Ascending aorta (tissue), 2 donors: ENCODE measurements at regions of chr12 and their contacts with region 1.

Region 1: DNA sequence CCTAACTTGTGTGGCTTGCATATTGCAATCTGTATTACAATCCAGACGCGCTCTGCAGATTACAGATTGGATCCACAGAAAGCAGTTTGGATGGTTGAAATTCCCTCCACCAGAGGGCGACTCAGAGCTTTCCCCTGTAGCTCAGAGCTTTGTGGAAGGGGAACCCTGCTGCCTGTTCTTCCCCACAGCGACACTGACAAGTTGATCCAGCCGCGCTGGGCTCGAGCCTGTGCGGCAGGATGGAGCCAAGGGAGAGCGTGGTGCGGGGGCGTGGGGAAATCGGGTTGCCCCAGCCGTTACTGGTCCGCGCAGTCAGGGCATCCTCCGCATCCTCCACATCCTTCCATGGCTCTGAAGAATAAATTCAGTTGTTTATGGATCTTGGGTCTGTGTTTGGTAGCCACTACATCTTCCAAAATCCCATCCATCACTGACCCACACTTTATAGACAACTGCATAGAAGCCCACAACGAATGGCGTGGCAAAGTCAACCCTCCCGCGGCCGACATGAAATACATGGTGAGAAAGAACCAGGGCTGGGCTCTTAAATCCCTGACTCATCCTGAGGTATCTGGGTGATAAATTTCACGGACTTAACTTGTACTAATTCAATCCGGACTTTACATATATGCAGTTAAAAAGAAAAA is at the start of gene GLIPR1L1:
- DNase-seq: peak; percentile 43 to 96
- H3K4me3 ChIP-seq: peak within 1 kb of the TSS; percentile 54 to 63
- H3K27ac ChIP-seq: peak within 1 kb of the TSS; percentile 28 to 32
- H3K4me1 ChIP-seq: peaks cover 5 to 8% of the 10 kb centered on the region in 2 donors
- H3K27me3 ChIP-seq: no peaks in the 10 kb centered on the region
- CTCF ChIP-seq: peak; percentile 80 to 91 (median 87)
- total RNA-seq, gene GLIPR1L1: not detected

Region 2: GRCh38 chr12:75390899-75391538 is 56.5 kb after region 1 on chr12 and contains the start of gene GLIPR1L2:
- intact Hi-C with region 1: loop called (anchors 2 kb)
- DNase-seq: peak; percentile 89 to 98
- H3K4me3 ChIP-seq: peak within 1 kb of the TSS; percentile 63 to 76
- H3K27ac ChIP-seq: peak within 1 kb of the TSS; percentile 95 to 97
- H3K4me1 ChIP-seq: peaks cover 0 to 8% of the 10 kb centered on the region in 2 donors
- H3K27me3 ChIP-seq: no peaks in the 10 kb centered on the region
- CTCF ChIP-seq: peak; percentile 76 to 84 (median 79)
- total RNA-seq, gene GLIPR1L2: not detected

Region 3: GRCh38 chr12:75480469-75480949 is 146.0 kb after region 1 on chr12 and contains the start of gene GLIPR1:
- intact Hi-C with region 1: loop called (anchors 2 kb)
- DNase-seq: peak; percentile 52 to 94
- H3K4me3 ChIP-seq: peak within 1 kb of the TSS; percentile 66 to 75
- H3K27ac ChIP-seq: peak within 1 kb of the TSS; percentile 88 to 90
- H3K4me1 ChIP-seq: peaks cover 5 to 14% of the 10 kb centered on the region in 2 donors
- H3K27me3 ChIP-seq: no peaks in the 10 kb centered on the region
- CTCF ChIP-seq: no peak
- total RNA-seq, gene GLIPR1: 43.9 TPM

Region 4: DNA sequence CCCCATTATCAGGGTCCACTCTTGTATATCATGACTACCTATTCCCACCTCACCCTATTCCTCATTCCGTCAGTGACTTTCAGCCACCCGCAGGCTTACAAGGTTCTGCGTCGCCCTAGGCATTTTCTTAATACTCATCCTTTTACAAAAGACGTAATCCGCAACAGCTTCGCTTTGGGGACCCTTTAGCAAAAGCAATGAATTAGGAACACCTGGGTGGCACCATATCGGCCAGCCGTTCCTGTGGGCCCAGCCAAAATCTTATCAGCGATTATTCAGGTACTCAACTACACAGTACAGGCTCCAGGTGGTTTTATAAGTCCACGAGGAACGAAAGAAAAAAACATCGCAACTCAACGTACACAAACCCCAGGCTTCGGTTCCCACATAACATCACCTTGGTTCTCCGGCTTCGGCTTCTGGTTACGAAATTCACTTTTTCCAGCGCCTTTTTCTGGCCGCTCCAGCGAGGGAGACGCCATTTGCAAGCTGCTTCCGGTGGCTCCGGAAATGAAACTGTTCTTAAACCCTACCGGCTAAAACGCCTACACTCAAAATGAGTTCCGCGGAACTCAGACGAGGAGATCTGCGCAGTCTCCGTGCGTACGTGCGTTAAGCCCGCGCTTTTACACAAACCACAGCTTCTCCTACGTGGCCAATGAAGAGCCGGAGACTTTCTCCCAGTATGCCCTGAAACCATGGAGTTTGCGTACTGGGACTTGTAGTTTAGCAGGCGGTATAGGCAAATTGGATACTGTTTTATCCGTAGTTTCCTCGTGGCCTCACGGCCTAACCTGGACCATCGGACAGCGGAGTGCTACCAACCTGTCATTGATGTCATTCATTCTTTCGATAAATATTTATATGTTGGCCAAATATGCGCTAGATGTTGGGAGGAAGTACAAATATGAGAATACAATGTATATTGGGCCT is 176.9 kb after region 1 on chr12 and contains the start of gene KRR1:
- intact Hi-C with region 1: loop called (anchors 2 kb)
- DNase-seq: peak; percentile 68 to 96
- H3K4me3 ChIP-seq: peak within 1 kb of the TSS; percentile 87 to 90
- H3K27ac ChIP-seq: peak within 1 kb of the TSS; percentile 73 to 81
- H3K4me1 ChIP-seq: peaks cover 3 to 12% of the 10 kb centered on the region in 2 donors
- H3K27me3 ChIP-seq: no peaks in the 10 kb centered on the region
- CTCF ChIP-seq: no peak
- total RNA-seq, gene KRR1: 23.9 TPM

Region 5: DNA sequence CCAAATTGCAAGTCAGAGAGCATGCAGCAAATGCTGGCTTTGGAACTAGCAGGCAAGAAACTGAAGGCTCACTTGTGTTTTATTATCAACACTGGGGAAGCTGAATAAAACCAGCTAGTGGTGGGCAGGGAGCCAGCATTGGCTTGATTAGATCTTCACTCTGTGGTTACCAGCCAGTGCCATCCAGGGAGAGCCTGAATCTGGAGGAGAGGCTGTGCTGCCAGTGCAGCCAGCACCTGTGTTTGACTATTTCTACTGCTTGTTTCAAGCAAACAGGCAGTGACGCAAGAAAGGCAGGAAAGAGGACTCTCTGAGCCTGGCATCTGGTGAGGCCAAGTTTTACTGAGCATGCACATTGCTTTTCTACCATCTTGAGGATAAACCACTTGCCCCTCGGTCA is 450.1 kb after region 1 on chr12:
- intact Hi-C with region 1: no loop called
- DNase-seq: no peak
- H3K4me3 ChIP-seq: no peak overlapping the region
- H3K27ac ChIP-seq: peak overlapping the region; percentile 80 to 83
- H3K4me1 ChIP-seq: peaks cover 8 to 44% of the 10 kb centered on the region in 2 donors
- H3K27me3 ChIP-seq: no peaks in the 10 kb centered on the region
- CTCF ChIP-seq: no peak

Region 6: DNA sequence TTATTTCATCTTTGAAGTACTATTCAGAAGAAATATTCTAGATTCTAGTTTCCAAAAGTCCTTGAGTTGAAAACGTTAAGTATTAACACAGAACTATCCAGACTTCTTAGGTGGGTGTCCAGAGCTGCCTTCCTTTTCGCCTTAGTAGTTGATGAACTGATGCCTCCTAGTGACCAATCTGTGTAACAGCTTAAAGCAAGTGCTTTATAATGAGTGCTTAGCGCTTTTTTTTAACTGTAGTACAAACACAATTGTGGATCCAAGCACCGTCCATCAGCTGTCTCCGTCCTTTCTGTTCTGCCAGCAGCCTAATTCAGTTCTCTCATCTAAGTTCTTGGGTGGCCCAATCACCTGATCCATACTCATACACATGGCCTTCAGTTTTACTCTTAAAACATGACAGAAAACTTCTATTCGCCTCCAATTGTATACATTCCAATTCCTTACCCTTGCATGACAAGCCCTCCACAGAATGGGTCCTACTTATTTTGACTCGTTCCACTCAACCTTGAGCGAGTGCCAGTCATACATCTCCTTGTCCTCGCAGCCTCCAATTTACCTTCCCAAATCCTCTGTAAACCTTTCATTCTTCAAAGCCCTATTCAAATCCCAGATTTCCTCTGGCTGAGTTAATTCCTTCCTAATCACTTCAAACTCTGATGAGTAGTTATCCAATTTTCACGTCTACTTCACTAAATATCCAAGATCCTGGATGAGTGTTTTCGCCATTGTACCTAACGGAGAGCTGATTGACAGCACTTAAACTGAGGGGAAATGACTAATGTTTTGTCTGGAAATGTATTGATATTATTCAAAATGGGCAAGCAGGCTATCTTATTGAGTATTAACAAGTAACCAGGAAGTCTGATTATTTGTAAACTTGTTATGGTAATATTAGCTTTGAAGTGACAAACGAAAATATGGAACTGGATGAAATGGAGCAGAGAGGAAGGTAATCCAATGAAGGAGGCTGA is 702.9 kb after region 1 on chr12:
- intact Hi-C with region 1: loop called (anchors 5 kb)
- DNase-seq: no peak
- H3K4me3 ChIP-seq: no peak overlapping the region
- H3K27ac ChIP-seq: no peak overlapping the region
- H3K4me1 ChIP-seq: no peaks in the 10 kb centered on the region
- H3K27me3 ChIP-seq: no peaks in the 10 kb centered on the region
- CTCF ChIP-seq: peak; percentile 70 to 85 (median 84)

Region 7: DNA sequence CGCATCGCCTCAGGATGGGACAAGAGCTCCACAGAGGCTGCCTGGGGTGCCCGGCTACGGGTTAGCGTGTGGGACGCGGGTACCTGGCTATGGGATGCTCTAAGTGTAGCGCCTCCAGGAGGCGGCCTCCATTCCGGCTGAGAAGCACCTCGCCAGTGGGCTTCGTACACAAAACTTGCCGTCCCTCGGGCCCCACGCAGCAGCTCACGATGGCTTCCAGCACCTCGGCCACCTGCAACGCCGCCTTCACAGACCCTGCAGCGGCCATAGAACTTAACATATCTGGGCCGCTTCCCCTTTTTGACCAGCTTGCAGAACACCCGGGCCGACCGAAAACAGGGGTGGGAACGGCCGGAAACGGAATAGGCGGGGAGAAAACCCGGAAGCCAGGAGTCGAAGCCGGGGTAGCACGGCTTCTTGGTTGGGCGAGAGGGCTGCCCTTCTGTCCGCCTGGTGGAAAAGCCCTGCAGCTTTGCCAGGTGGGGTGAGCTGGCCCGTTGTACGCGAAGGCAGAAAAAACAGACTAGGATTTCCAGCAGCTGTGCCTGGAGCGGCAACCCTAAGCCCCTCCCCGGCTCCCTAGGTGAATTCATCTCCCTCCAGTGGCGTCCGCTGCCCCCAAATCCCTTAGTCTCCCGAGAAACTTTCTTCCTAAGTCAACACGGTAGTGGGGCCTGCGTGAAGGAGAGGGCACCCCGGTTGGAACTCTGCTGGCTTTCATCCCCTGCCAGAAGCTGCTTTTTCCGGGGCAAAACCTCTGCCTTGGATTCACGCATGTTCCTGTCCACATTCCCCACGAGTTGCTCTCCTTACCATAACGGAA is 1013.8 kb after region 1 on chr12 and contains the start of gene BBS10:
- intact Hi-C with region 1: loop called (anchors 10 kb)
- DNase-seq: peak; percentile 65 to 94
- H3K4me3 ChIP-seq: peak within 1 kb of the TSS; percentile 70 to 85
- H3K27ac ChIP-seq: peak within 1 kb of the TSS; percentile 84 to 86
- H3K4me1 ChIP-seq: peaks cover 6 to 22% of the 10 kb centered on the region in 2 donors
- H3K27me3 ChIP-seq: no peaks in the 10 kb centered on the region
- CTCF ChIP-seq: peak; percentile 12 to 48 (median 17)
- total RNA-seq, gene BBS10: 3.8 TPM

Region 8: DNA sequence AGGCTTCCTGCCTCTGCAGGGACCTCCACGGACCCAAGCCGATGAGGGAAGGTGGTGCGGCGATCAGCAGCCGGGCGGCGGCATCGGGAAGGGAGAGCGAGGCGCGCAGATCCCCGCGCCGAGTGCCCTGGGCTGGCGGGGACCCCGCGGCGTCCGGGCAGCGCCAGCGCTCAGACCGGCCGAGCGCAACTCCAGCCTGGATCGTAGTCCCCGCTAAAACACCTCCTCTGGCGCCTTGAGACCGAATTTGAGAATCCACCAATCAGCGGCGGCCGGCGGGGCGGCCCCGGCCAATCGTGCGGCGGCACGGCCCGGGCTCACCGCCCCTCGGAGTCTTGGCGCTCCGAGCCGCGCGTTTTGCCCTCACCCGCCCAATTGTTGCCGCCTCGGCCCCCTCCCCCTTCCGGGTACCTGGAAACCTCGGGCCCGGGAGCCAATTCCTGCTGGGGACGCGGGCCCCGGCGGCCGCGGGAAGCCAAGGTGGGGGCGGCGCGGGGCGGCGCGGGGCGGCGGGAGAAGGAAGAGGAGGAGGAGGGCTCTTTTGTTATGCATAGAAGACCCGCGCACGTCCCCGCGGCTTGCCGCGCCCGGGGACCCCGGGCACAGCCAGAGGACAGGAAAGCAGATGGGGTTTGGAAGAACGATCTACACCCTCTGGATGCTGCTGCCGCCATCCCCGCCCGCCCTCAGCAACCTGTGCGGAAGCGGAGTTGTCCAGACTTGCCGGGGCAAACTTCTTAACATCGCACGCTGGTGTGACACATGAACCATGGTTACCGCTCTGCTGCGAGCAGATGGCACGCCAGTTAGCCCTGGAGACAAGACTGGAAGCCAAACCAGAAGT is 1731.1 kb after region 1 on chr12 and contains the start of gene E2F7:
- intact Hi-C with region 1: loop called (anchors 10 kb)
- DNase-seq: peak; percentile 35 to 91
- H3K4me3 ChIP-seq: peak within 1 kb of the TSS; percentile 65 to 71
- H3K27ac ChIP-seq: peak within 1 kb of the TSS; percentile 6 to 16
- H3K4me1 ChIP-seq: peaks cover 0 to 6% of the 10 kb centered on the region in 2 donors
- H3K27me3 ChIP-seq: no peaks in the 10 kb centered on the region
- CTCF ChIP-seq: no peak
- total RNA-seq, gene E2F7: not detected